HCT116 (cell line): ENCODE measurements at regions of chr6 and their contacts with region 1.

Region 1: GRCh38 chr6:36759148-36759759 is 61.6 kb downstream of the RAB44 start:
- DNase-seq: peak; percentile 37
- ATAC-seq: peak; percentile 95
- H3K4me3 ChIP-seq: peak overlapping the region; percentile 23 to 51
- H3K27ac ChIP-seq: no peak overlapping the region
- H3K4me1 ChIP-seq: peaks cover 4 to 29% of the 10 kb centered on the region in 2 experiments; a peak in 3 of 4 replicates
- H3K27me3 ChIP-seq: no peaks in the 10 kb centered on the region
- CTCF ChIP-seq: peak; percentile 87 to 99 (median 98)
- POLR2A ChIP-seq: no peak
- RAD21 ChIP-seq: peak; percentile 93

Region 2: DNA sequence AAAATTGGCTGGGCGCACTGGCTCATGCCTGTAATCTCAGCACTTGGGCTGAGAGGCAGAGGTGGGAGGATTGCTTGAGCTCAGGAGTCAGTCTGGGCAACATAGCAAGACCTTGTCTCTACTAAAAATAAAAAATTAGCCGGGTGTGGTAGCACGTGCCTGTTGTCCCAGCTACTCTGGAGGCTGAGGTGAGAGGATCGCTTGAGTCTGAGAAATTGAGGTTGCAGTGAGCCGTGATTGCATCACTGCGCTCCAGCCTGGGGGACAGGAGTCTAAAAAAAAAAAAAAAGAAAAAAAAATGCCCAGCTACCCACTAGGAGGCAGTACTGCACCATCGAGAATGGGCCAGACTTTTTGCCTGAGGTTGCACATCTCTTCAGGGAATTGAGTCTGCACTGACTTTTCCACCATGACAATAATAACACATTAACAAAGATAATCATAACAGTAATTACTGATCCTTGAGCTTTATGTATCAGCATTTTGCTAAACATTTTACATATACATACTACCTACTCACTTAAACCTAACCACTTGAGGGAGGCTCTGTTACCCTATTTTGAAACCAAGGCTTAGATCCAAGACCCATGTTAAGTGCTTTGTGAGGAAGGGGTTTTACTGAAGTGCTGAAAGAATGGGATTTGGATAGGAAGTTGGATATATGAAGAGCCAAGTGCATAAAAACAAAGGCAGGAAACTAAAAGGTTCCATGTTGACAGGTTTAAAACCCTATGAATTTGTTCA is 144.1 kb before region 1 on chr6:
- CTCF ChIA-PET with region 1: interaction called, 29 read pairs
- POLR2A ChIA-PET with region 1: no interaction called
- RAD21 ChIA-PET with region 1: interaction called in 1 of 2 experiments, 7 read pairs
- intact Hi-C with region 1: loop called (anchors 1 kb)
- DNase-seq: peak; percentile 41
- ATAC-seq: peak; percentile 58
- H3K4me3 ChIP-seq: no peak overlapping the region
- H3K27ac ChIP-seq: no peak overlapping the region
- H3K4me1 ChIP-seq: peaks cover 16 to 17% of the 10 kb centered on the region in 2 experiments
- H3K27me3 ChIP-seq: no peaks in the 10 kb centered on the region
- CTCF ChIP-seq: peak; percentile 70 to 86 (median 79)
- POLR2A ChIP-seq: no peak
- RAD21 ChIP-seq: peak; percentile 89

Region 3: GRCh38 chr6:36623547-36624459 is 135.5 kb before region 1 on chr6:
- CTCF ChIA-PET with region 1: interaction called, 11 read pairs
- POLR2A ChIA-PET with region 1: no interaction called
- RAD21 ChIA-PET with region 1: no interaction called
- intact Hi-C with region 1: loop called (anchors 2 kb)
- DNase-seq: peak; percentile 58
- ATAC-seq: peak; percentile 92
- H3K4me3 ChIP-seq: no peak overlapping the region
- H3K27ac ChIP-seq: no peak overlapping the region
- H3K4me1 ChIP-seq: peaks cover 0 to 11% of the 10 kb centered on the region in 2 experiments; a peak in 2 of 4 replicates
- H3K27me3 ChIP-seq: no peaks in the 10 kb centered on the region
- CTCF ChIP-seq: peak; percentile 92 to 96 (median 93)
- POLR2A ChIP-seq: no peak
- RAD21 ChIP-seq: peak; percentile 98

Region 4: DNA sequence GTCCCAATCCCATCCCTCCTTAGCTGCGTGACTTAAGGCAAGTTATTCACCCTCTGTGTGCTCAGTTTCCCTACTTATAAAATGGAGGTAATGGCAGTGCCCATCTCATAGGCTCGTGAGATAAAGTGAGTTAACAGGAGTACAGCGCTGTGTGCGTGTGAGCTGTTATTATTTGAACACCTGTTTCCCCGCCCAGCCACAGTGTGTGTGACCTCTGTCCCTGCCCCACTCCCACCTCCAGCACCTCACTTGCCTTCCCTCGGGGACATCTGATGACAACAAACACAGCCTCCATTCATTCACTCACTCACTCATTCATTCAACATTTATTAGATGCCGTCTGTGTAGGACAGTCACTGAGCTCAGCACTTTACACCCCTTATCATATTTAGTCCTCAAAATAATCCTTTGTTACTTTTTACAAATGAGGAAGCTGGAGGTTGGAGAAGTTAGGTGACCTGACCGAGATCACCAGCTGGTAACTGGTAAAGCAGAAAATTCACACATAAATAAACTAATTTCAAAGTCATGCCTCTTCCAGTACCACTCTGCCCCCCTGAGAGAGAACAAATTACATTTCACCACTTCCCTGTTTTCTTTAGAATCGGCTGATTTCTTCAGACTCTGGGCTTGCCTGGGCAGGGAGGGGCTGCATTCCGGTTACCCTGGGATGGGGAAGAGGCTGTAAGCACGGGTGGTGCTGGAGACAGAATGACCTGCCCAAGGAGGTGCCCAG is 21.4 kb after region 1 on chr6:
- CTCF ChIA-PET with region 1: interaction called, 18 read pairs
- POLR2A ChIA-PET with region 1: no interaction called
- RAD21 ChIA-PET with region 1: no interaction called
- intact Hi-C with region 1: no loop called
- DNase-seq: no peak
- ATAC-seq: no peak
- H3K4me3 ChIP-seq: no peak overlapping the region
- H3K27ac ChIP-seq: no peak overlapping the region
- H3K4me1 ChIP-seq: no peaks in the 10 kb centered on the region
- H3K27me3 ChIP-seq: peaks cover 6% of the 10 kb centered on the region; the same call in 1 of the 2 replicates
- CTCF ChIP-seq: no peak
- POLR2A ChIP-seq: no peak
- RAD21 ChIP-seq: no peak

Region 5: DNA sequence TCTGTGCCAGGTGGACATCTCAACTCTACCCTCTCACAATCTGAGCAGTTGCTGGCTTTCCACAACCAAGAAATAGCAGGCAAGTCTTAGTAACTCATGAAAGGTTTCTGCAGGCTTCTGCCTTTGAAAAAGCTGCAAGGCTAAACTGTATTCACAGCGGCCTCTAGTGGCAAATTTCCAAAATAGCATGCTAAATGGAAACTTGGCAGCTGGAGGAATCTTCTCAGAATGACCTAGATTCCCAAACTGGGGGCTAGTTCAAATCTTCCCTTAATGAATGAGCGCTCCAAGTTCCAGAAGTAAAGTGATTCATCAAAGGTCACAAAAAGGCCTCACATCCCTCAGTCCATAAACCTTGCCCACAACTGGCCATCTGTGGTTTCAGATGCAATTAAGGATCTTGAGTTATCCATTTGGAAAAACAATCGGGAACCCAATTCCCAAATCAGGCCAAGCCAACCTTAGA is 91.9 kb after region 1 on chr6:
- CTCF ChIA-PET with region 1: interaction called, 10 read pairs
- POLR2A ChIA-PET with region 1: no interaction called
- RAD21 ChIA-PET with region 1: no interaction called
- intact Hi-C with region 1: no loop called
- DNase-seq: peak; percentile 37
- ATAC-seq: peak; percentile 44; the same call in 1 of the 2 replicates
- H3K4me3 ChIP-seq: no peak overlapping the region
- H3K27ac ChIP-seq: no peak overlapping the region
- H3K4me1 ChIP-seq: no peaks in the 10 kb centered on the region; a peak in 1 of 4 replicates
- H3K27me3 ChIP-seq: no peaks in the 10 kb centered on the region
- CTCF ChIP-seq: peak; percentile 62 to 88 (median 76); a peak in 5 of 6 replicates
- POLR2A ChIP-seq: no peak
- RAD21 ChIP-seq: peak; percentile 71